ENCODE measurements at regions of chr6 and their contacts with region 1.

Region 1: DNA sequence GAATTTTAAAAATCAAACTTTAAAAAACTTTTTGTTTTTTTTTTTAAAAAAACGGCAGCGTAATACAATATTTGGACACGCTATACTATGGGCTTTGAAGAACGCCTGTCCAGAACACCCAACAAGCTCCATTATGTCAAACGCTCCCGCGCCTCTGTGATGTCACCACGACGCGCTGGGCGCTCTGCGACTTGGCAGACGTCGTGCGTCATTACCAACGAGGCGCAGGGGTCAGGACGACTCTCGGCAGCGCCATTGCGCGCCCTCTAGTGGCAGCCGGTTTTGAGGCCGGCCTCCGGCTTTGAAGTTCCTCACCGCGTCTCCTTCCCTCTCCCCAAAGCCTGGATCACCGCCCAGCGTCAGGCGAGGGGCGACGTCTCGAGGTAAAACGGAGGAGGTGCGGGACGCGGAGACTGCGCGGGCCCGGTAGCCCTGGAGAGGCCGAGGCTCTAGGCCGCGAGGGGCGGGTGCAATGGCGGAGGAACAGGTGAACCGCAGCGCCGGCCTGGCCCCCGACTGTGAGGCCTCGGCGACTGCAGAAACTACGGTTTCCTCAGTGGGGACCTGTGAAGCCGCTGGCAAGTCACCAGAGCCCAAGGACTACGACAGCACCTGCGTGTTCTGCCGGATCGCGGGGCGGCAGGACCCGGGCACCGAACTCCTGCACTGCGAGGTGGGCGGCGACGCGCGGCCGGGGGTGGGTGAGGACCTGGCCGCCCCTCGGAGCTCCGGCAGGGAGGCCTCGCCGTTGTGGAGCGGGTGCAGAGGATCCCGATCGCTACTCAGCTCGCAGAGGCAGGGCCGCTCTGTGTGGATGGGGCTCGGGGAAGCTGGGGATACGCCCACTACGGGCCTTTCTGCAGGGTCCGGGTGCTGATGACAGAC is at the start of gene HINT3:
- DNase-seq: peak; percentile 98 to 99
- ATAC-seq: peak; percentile 97 to 98 (median 97)
- H3K4me3 ChIP-seq: peak within 1 kb of the TSS; percentile 97
- H3K27ac ChIP-seq: peak within 1 kb of the TSS; percentile 98
- H3K4me1 ChIP-seq: peaks cover 12% of the 10 kb centered on the region
- H3K27me3 ChIP-seq: peaks cover 0 to 10% (median 0%) of the 10 kb centered on the region in 3 donors
- CTCF ChIP-seq: peak; percentile 97
- total RNA-seq, gene HINT3: 55.2 to 79.9 (median 59.5) TPM

Region 2: GRCh38 chr6:125307150-125307838 is 649.5 kb before region 1 on chr6:
- intact Hi-C with region 1: loop called (anchors 5 to 10 kb)
- DNase-seq: no peak
- ATAC-seq: peak; percentile 73 to 79 (median 76)
- H3K4me3 ChIP-seq: no peak overlapping the region
- H3K27ac ChIP-seq: peak overlapping the region; percentile 64
- H3K4me1 ChIP-seq: no peaks in the 10 kb centered on the region
- H3K27me3 ChIP-seq: no peaks in the 10 kb centered on the region
- CTCF ChIP-seq: no peak

Region 3: DNA sequence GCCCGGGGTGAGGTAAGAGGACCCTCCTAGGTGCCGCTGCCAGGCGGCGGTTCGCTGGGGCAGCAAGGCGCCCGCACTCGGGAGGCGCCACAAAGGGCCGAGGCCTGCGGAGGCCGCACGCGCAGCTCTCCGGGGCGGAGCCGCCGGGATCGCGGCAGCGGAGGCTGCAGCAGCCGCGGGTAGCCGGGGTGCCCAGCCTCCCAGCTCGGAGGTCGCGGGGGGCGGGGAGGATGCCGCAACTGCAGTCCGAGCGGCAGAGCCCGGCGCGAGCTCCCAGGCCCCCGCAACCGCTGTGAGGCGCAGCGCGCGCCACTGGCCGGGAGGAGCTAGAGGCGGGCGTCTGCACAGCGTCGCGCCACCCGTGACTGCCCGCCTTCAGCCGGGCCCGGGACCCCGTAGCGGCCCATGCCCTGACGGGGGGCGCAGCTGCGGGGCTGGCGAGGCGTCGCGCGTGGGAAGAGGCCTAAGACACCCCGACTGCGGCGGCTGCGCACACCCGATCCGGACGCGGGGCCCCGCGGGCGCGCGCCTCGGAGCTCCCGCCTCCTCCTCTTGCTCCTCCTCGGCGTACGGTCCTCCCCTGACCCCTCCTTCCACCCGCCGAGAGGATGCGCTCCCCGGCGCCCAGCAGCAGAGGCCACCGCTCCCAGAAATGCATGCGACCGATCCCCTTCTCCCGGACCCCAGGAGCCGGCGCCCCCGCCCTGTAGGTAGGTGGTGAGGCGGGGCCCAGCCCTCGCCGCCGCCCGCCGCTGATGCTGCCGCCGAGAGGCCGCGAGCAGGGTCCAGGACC is 166.2 kb before region 1 on chr6 and contains the start of gene NCOA7:
- intact Hi-C with region 1: loop called (anchors 2 to 5 kb)
- DNase-seq: peak; percentile 83 to 91
- ATAC-seq: peak; percentile 86 to 92 (median 92)
- H3K4me3 ChIP-seq: peak within 1 kb of the TSS; percentile 89
- H3K27ac ChIP-seq: peak within 1 kb of the TSS; percentile 91
- H3K4me1 ChIP-seq: peaks cover 13% of the 10 kb centered on the region
- H3K27me3 ChIP-seq: no peaks in the 10 kb centered on the region
- CTCF ChIP-seq: no peak
- total RNA-seq, gene NCOA7: 8.2 to 22.5 (median 13.2) TPM

Region 4: GRCh38 chr6:125858427-125859320 is 98.1 kb before region 1 on chr6:
- intact Hi-C with region 1: loop called (anchors 5 to 10 kb)
- DNase-seq: no peak
- ATAC-seq: peak; percentile 48 to 84 (median 69)
- H3K4me3 ChIP-seq: no peak overlapping the region
- H3K27ac ChIP-seq: no peak overlapping the region
- H3K4me1 ChIP-seq: no peaks in the 10 kb centered on the region
- H3K27me3 ChIP-seq: no peaks in the 10 kb centered on the region
- CTCF ChIP-seq: peak; percentile 68

Region 5: DNA sequence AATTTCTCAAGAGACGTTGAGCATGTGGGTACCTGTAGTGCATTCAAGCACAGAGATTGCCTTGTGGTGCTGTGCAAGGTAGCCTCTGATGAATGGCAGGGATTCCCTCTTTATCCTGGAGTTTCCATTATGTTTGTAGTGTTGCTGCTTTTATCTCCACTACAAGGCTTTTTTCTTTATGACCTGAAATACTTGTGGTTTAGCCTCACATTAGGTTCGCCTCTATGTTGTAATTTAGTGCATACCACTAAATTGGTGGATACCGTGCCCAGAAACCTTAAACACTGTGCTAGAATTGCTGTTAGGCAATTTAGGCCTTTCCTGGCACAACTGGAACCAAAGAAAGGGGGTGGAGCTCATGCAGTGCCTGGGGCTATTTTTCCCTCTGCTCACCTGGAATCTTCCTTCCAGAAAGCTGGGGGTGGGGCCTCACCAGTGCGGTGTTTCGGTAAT is 89.2 kb before region 1 on chr6:
- intact Hi-C with region 1: loop called in 1 of 2 experiments (anchors 10 kb)
- DNase-seq: no peak
- ATAC-seq: no peak
- H3K4me3 ChIP-seq: no peak overlapping the region
- H3K27ac ChIP-seq: no peak overlapping the region
- H3K4me1 ChIP-seq: no peaks in the 10 kb centered on the region
- H3K27me3 ChIP-seq: no peaks in the 10 kb centered on the region
- CTCF ChIP-seq: no peak

Region 6: GRCh38 chr6:125918681-125919566 is 37.8 kb before region 1 on chr6:
- intact Hi-C with region 1: loop called in 1 of 2 experiments (anchors 5 kb)
- DNase-seq: no peak
- ATAC-seq: peak; percentile 70 to 93 (median 76)
- H3K4me3 ChIP-seq: peak overlapping the region; percentile 59
- H3K27ac ChIP-seq: peak overlapping the region; percentile 75
- H3K4me1 ChIP-seq: no peaks in the 10 kb centered on the region
- H3K27me3 ChIP-seq: no peaks in the 10 kb centered on the region
- CTCF ChIP-seq: no peak

Measured in psoas muscle (tissue), 8 donors.